ENCODE measurements at regions of chr17 and their contacts with region 1.

Region 1: GRCh38 chr17:20244671-20245070 is 222.7 kb downstream of the LGALS9B start:
- DNase-seq: no peak
- ATAC-seq: no peak
- H3K4me3 Mint-ChIP-seq: no peak overlapping the region
- H3K27ac Mint-ChIP-seq: peak overlapping the region in 2 of 10 donors; percentile 20 to 31
- H3K4me1 Mint-ChIP-seq: peaks cover 27 to 44% (median 34%) of the 10 kb centered on the region in 4 donors
- H3K27me3 Mint-ChIP-seq: no peaks in the 10 kb centered on the region

Region 2: DNA sequence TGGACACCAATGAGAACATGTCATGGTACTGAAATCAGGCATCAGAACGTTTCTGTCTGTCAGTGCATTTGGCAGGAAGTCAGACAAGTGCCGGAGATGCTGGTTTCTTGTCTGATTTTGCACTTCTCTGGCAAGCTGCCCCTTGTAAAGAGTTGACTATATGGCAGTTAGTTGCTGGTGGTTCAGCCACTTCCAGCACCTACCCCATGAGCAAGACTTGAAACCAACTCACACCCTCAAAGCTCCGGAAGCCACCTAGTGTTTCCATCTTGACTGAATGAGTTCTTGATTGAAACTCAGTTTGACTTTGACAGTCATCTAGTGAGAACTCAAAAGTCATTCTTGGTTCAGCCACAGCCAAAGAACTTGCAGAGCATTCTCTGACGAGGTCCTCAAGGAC is 10.4 kb before region 1 on chr17:
- POLR2A ChIA-PET with region 1: interaction called, 18 read pairs
- DNase-seq: peak in 9 of 10 donors; percentile 22 to 84 (median 59)
- ATAC-seq: peak; percentile 98 to 99
- H3K4me3 Mint-ChIP-seq: peak overlapping the region; percentile 27 to 78 (median 62)
- H3K27ac Mint-ChIP-seq: peak overlapping the region; percentile 26 to 94 (median 78)
- H3K4me1 Mint-ChIP-seq: peaks cover 18 to 63% (median 33%) of the 10 kb centered on the region in 4 donors
- H3K27me3 Mint-ChIP-seq: no peaks in the 10 kb centered on the region

Region 3: DNA sequence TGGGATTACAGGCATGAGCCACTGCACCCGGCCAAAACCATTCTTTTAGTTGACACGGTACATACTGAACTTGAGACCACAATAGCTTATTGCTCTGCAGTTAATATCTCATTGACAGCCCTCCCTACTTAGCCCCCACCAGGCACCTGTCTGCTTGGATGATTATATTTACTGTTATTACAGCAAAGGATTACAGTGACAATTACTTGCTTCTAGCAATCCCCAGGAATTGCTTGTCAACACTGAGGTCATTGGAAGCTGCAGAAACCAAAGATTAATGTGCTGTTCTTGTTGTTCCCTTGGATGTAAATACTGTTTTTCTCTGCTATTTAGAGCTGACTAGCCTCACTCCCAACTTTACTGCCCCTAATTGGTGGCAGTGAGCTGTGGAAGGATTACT is 11.5 kb after region 1 on chr17:
- POLR2A ChIA-PET with region 1: interaction called, 16 read pairs
- DNase-seq: no peak
- ATAC-seq: no peak
- H3K4me3 Mint-ChIP-seq: no peak overlapping the region
- H3K27ac Mint-ChIP-seq: peak overlapping the region in 1 of 10 donors; percentile 11
- H3K4me1 Mint-ChIP-seq: peaks cover 22 to 65% (median 49%) of the 10 kb centered on the region in 4 donors
- H3K27me3 Mint-ChIP-seq: no peaks in the 10 kb centered on the region

Region 4: GRCh38 chr17:20263595-20263994 is 18.9 kb after region 1 on chr17:
- POLR2A ChIA-PET with region 1: interaction called, 16 read pairs
- DNase-seq: no peak
- ATAC-seq: no peak
- H3K4me3 Mint-ChIP-seq: peak overlapping the region in 3 of 10 donors; percentile 10 to 36 (median 34)
- H3K27ac Mint-ChIP-seq: peak overlapping the region in 9 of 10 donors; percentile 50 to 94 (median 76)
- H3K4me1 Mint-ChIP-seq: peaks cover 34 to 77% (median 67%) of the 10 kb centered on the region in 4 donors
- H3K27me3 Mint-ChIP-seq: no peaks in the 10 kb centered on the region

Region 5: GRCh38 chr17:20291853-20292252 is 47.2 kb after region 1 on chr17:
- POLR2A ChIA-PET with region 1: no interaction called
- DNase-seq: no peak
- ATAC-seq: no peak
- H3K4me3 Mint-ChIP-seq: no peak overlapping the region
- H3K27ac Mint-ChIP-seq: peak overlapping the region in 2 of 10 donors; percentile 67 to 74
- H3K4me1 Mint-ChIP-seq: peaks cover 0 to 12% (median 3%) of the 10 kb centered on the region in 4 donors
- H3K27me3 Mint-ChIP-seq: no peaks in the 10 kb centered on the region

Measured in naive thymus-derived CD8-positive, alpha-beta T cell (primary cell).